Caco-2 (cell line): ENCODE measurements at regions of chr2 and their contacts with region 1.

Region 1: GRCh38 chr2:217510771-217511291 is 492.0 kb downstream of the TNS1 start:
- DNase-seq: peak; percentile 70 to 76
- H3K4me3 ChIP-seq: no peak overlapping the region
- H3K4me3 Mint-ChIP-seq: no peak overlapping the region
- H3K27ac Mint-ChIP-seq: peak overlapping the region; percentile 30
- H3K4me1 ChIP-seq: peaks cover 5% of the 10 kb centered on the region
- H3K4me1 Mint-ChIP-seq: peaks cover 24% of the 10 kb centered on the region
- H3K27me3 ChIP-seq: no peaks in the 10 kb centered on the region
- H3K27me3 Mint-ChIP-seq: peaks cover 8% of the 10 kb centered on the region
- CTCF ChIP-seq: peak; percentile 80 to 88

Region 2: DNA sequence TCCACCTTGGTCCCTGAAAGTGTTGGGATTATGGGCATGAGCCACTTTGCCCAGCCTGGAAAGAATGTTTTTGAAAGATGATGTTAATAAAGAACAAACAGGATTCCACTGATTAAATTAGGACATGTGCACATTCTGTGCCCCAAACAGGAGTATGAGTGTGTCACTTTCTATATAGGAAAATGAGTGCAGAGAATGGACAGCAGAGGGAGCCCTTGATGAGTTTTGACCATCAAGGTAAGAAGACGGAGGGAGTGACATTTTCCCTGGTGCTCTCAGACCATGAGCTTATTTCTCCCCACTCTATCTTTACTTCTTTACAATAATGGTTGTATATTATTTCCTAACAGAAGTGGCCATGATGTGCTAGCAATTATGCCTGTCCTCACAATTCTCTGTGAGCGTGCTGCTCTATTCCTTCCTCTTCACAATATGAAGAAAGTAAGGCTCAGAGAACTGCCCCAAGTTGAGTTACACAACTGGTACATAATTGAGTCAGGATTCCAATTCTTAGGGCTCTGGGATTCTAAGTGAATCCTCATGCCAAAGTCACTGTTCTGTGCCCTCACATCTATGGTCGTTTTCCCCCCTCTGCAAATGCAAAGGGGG is 991.6 kb before region 1 on chr2:
- CTCF ChIA-PET with region 1: no interaction called
- POLR2A ChIA-PET with region 1: no interaction called
- intact Hi-C with region 1: loop called (anchors 2 kb)
- DNase-seq: peak; percentile 68 to 73
- H3K4me3 ChIP-seq: no peak overlapping the region
- H3K4me3 Mint-ChIP-seq: no peak overlapping the region
- H3K27ac Mint-ChIP-seq: no peak overlapping the region
- H3K4me1 ChIP-seq: no peaks in the 10 kb centered on the region
- H3K4me1 Mint-ChIP-seq: no peaks in the 10 kb centered on the region
- H3K27me3 ChIP-seq: no peaks in the 10 kb centered on the region
- H3K27me3 Mint-ChIP-seq: no peaks in the 10 kb centered on the region
- CTCF ChIP-seq: peak; percentile 71 to 72

Region 3: GRCh38 chr2:216698895-216699294 is 811.9 kb before region 1 on chr2:
- CTCF ChIA-PET with region 1: interaction called, 7 read pairs
- POLR2A ChIA-PET with region 1: no interaction called
- intact Hi-C with region 1: loop called (anchors 1 kb)
- DNase-seq: peak in 1 of 2 experiments; percentile 55
- H3K4me3 ChIP-seq: no peak overlapping the region
- H3K4me3 Mint-ChIP-seq: no peak overlapping the region
- H3K27ac Mint-ChIP-seq: no peak overlapping the region
- H3K4me1 ChIP-seq: peaks cover 6% of the 10 kb centered on the region; the same call in 1 of the 2 replicates
- H3K4me1 Mint-ChIP-seq: peaks cover 6% of the 10 kb centered on the region
- H3K27me3 ChIP-seq: no peaks in the 10 kb centered on the region; the same call in 1 of the 2 replicates
- H3K27me3 Mint-ChIP-seq: peaks cover 16% of the 10 kb centered on the region
- CTCF ChIP-seq: peak; percentile 69 to 80

Region 4: DNA sequence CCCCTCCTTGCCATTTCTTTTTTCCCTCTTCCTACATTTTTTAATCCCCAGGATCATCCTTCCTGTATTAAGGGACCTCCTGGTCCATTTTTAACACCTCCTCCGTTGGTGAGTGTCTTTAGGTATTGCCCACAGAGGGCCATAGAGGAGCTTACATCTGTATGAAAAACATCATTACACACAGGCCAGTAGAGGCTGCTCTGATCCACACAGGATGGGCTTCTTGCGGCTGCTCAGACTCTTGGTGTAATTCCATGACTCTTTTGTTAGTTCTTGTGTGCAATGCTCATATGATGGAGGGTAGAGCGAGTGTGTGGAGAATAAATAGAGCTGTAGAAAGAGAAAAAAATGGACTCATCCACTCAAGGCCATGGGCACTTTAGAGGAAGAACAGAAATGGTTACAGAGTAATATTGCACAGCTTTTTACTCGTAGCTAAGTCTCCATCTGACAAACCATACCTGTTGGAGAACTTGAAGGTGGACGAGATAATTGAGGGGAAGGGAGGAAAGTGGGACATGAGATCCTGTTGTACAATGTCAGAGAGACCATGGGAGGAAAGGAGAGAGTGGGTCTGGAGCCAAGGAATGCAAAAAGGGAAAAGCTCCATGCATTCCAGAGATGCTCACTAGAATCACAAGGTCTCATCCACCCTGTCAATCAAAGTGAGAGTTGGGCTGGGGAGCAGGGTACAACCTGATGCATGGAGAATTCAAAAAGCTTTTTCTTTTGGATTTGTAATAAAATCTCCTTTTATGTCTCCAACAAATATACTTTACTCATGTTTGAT is 521.3 kb before region 1 on chr2:
- CTCF ChIA-PET with region 1: no interaction called
- POLR2A ChIA-PET with region 1: no interaction called
- intact Hi-C with region 1: loop called (anchors 10 kb)
- DNase-seq: no peak
- H3K4me3 ChIP-seq: no peak overlapping the region
- H3K4me3 Mint-ChIP-seq: no peak overlapping the region
- H3K27ac Mint-ChIP-seq: no peak overlapping the region
- H3K4me1 ChIP-seq: no peaks in the 10 kb centered on the region
- H3K4me1 Mint-ChIP-seq: no peaks in the 10 kb centered on the region
- H3K27me3 ChIP-seq: no peaks in the 10 kb centered on the region
- H3K27me3 Mint-ChIP-seq: peaks cover 16% of the 10 kb centered on the region
- CTCF ChIP-seq: peak in 1 of 2 experiments; percentile 33

Region 5: GRCh38 chr2:217181512-217181911 is 329.3 kb before region 1 on chr2:
- CTCF ChIA-PET with region 1: no interaction called
- POLR2A ChIA-PET with region 1: interaction called, 12 read pairs
- intact Hi-C with region 1: no loop called
- DNase-seq: no peak
- H3K4me3 ChIP-seq: no peak overlapping the region
- H3K4me3 Mint-ChIP-seq: no peak overlapping the region
- H3K27ac Mint-ChIP-seq: no peak overlapping the region
- H3K4me1 ChIP-seq: no peaks in the 10 kb centered on the region
- H3K4me1 Mint-ChIP-seq: no peaks in the 10 kb centered on the region
- H3K27me3 ChIP-seq: no peaks in the 10 kb centered on the region
- H3K27me3 Mint-ChIP-seq: peaks cover 3% of the 10 kb centered on the region
- CTCF ChIP-seq: no peak

Region 6: DNA sequence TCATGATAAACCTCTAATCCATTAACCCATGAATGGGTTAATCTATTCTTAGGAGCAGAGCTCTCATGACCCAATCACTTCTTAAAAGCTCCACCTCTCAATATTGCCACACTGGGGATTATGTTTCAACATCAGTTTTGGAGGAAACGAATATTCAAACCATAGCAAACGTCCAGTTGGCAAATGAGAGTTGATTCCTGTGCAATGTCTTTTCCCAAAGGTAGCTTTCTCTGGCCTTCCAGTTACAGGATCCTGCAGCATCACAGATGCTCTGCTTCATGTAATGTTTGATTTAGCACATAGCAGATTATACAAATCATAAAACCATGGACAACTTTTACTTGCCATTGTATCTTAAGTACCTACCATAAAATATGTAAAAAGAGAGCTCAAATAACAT is 11.0 kb after region 1 on chr2:
- CTCF ChIA-PET with region 1: no interaction called
- POLR2A ChIA-PET with region 1: no interaction called
- intact Hi-C with region 1: no loop called
- DNase-seq: no peak
- H3K4me3 ChIP-seq: no peak overlapping the region
- H3K4me3 Mint-ChIP-seq: no peak overlapping the region
- H3K27ac Mint-ChIP-seq: no peak overlapping the region
- H3K4me1 ChIP-seq: no peaks in the 10 kb centered on the region
- H3K4me1 Mint-ChIP-seq: no peaks in the 10 kb centered on the region
- H3K27me3 ChIP-seq: no peaks in the 10 kb centered on the region; the same call in 1 of the 2 replicates
- H3K27me3 Mint-ChIP-seq: peaks cover 2% of the 10 kb centered on the region
- CTCF ChIP-seq: no peak

Region 7: GRCh38 chr2:217551252-217551899 is 40.5 kb after region 1 on chr2:
- CTCF ChIA-PET with region 1: no interaction called
- POLR2A ChIA-PET with region 1: no interaction called
- intact Hi-C with region 1: no loop called
- DNase-seq: peak; percentile 60 to 73
- H3K4me3 ChIP-seq: no peak overlapping the region
- H3K4me3 Mint-ChIP-seq: peak overlapping the region; percentile 21
- H3K27ac Mint-ChIP-seq: peak overlapping the region; percentile 82
- H3K4me1 ChIP-seq: peaks cover 34% of the 10 kb centered on the region
- H3K4me1 Mint-ChIP-seq: peaks cover 41% of the 10 kb centered on the region
- H3K27me3 ChIP-seq: no peaks in the 10 kb centered on the region
- H3K27me3 Mint-ChIP-seq: no peaks in the 10 kb centered on the region
- CTCF ChIP-seq: no peak

Region 8: DNA sequence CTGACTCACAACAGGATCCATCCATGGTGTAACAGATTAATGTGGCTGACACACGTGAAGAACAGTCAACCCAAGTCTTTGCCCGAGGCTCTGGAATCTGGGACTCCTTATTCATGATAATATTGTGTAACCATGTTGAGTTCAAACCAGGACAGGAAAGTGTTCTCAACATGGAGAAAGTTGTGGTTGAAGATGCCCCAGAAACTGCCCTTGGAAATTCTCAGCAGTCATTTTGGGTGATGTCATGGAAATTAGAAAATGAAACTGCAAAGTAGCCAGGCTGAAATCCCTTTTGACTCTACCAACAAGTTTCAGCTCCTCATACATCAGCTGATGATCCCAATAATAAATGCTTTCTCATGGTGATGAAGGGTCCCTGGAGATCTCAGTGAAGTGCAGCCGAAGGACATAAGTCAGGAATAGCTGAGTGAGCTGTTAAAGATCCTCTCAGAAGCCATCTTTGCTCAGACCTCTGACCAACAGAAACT is 184.2 kb after region 1 on chr2:
- CTCF ChIA-PET with region 1: no interaction called
- POLR2A ChIA-PET with region 1: no interaction called
- intact Hi-C with region 1: no loop called
- DNase-seq: no peak
- H3K4me3 ChIP-seq: no peak overlapping the region
- H3K4me3 Mint-ChIP-seq: no peak overlapping the region
- H3K27ac Mint-ChIP-seq: no peak overlapping the region
- H3K4me1 ChIP-seq: no peaks in the 10 kb centered on the region
- H3K4me1 Mint-ChIP-seq: no peaks in the 10 kb centered on the region
- H3K27me3 ChIP-seq: no peaks in the 10 kb centered on the region
- H3K27me3 Mint-ChIP-seq: peaks cover 9% of the 10 kb centered on the region
- CTCF ChIP-seq: no peak

Region 9: GRCh38 chr2:217713395-217714286 is 202.8 kb after region 1 on chr2:
- CTCF ChIA-PET with region 1: interaction called, 16 read pairs
- POLR2A ChIA-PET with region 1: no interaction called
- intact Hi-C with region 1: loop called (anchors 1 kb)
- DNase-seq: peak; percentile 72 to 89
- H3K4me3 ChIP-seq: no peak overlapping the region
- H3K4me3 Mint-ChIP-seq: no peak overlapping the region
- H3K27ac Mint-ChIP-seq: no peak overlapping the region
- H3K4me1 ChIP-seq: no peaks in the 10 kb centered on the region
- H3K4me1 Mint-ChIP-seq: no peaks in the 10 kb centered on the region
- H3K27me3 ChIP-seq: no peaks in the 10 kb centered on the region; the same call in 1 of the 2 replicates
- H3K27me3 Mint-ChIP-seq: peaks cover 4% of the 10 kb centered on the region
- CTCF ChIP-seq: peak; percentile 97 to 98